ENCODE measurements at regions of chr3 and their contacts with region 1.

Region 1: DNA sequence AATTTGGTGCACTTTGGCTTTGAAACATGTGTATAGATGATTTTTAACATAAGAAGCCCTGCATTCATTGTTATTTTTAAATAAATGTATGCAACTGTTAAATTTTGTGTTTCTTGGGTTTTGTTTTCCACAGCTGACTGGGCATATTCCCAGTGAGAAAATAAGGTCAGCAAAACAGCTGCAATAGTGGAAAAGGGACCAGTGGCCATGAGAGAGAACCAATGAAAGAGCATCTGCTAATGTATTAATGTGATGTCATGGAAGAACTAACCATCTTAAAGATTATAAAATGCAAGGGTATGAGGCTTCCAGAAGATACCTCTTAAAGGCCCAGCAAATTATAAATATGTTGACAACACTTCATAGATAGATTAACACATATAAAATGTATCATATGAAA is 31.0 kb upstream of the KBTBD12 start:
- DNase-seq: no peak
- ATAC-seq: no peak
- H3K4me3 Mint-ChIP-seq: no peak overlapping the region
- H3K27ac Mint-ChIP-seq: no peak overlapping the region
- H3K4me1 Mint-ChIP-seq: no peaks in the 10 kb centered on the region
- H3K27me3 Mint-ChIP-seq: no peaks in the 10 kb centered on the region
- CTCF ChIP-seq: no peak

Region 2: GRCh38 chr3:127925384-127925783 is 41.3 kb after region 1 on chr3:
- CTCF ChIA-PET with region 1: no interaction called
- POLR2A ChIA-PET with region 1: interaction called, 10 read pairs
- intact Hi-C with region 1: no loop called
- DNase-seq: no peak
- ATAC-seq: no peak
- H3K4me3 Mint-ChIP-seq: no peak overlapping the region
- H3K27ac Mint-ChIP-seq: no peak overlapping the region
- H3K4me1 Mint-ChIP-seq: peaks cover 10% of the 10 kb centered on the region
- H3K27me3 Mint-ChIP-seq: peaks cover 3% of the 10 kb centered on the region
- CTCF ChIP-seq: no peak

Measured in activated B cell treated with CpG ODN at 0.5 μM for 24 hours (primary cell).